HEK293T (cell line): ENCODE measurements at regions of chr2 and their contacts with region 1.

Region 1: DNA sequence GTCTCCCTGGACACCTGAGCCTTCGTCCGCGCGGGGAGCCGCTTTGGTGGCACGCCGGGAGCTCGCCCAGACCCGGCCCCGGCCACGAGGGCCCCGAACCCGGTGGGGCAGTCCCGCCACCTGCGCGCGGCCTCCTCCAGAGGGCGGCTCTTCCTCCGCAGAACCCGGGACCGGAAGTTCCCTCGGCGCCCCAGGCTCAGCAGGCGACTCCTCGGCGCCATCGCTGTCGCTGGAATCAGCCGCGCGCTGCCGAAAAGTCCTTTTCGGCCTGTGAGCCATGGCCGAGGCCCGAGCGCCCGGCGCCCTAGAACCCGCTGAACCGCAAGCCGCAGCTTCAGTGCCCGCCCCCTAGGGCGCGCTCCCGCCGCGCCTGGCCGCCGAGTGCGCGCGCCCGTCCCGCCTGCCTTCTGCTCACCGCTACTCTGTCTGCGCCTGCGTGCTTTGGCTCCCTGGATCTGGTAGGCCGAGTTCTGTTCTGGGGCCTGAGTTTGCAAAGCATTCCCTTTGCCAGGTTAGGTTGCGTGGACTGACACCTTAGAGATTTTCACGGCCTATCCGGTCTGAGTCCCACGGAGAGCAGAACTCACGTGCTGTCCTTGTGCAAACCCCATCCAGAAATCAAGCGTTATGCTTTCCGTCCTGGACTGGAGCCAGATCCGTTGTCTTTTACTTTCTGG is at the start of gene GCFC2:
- DNase-seq: peak; percentile 85

Region 2: GRCh38 chr2:75608684-75609333 is 101.9 kb before region 1 on chr2:
- CTCF ChIA-PET with region 1: no interaction called
- POLR2A ChIA-PET with region 1: no interaction called
- DNase-seq: peak; percentile 83

Region 3: DNA sequence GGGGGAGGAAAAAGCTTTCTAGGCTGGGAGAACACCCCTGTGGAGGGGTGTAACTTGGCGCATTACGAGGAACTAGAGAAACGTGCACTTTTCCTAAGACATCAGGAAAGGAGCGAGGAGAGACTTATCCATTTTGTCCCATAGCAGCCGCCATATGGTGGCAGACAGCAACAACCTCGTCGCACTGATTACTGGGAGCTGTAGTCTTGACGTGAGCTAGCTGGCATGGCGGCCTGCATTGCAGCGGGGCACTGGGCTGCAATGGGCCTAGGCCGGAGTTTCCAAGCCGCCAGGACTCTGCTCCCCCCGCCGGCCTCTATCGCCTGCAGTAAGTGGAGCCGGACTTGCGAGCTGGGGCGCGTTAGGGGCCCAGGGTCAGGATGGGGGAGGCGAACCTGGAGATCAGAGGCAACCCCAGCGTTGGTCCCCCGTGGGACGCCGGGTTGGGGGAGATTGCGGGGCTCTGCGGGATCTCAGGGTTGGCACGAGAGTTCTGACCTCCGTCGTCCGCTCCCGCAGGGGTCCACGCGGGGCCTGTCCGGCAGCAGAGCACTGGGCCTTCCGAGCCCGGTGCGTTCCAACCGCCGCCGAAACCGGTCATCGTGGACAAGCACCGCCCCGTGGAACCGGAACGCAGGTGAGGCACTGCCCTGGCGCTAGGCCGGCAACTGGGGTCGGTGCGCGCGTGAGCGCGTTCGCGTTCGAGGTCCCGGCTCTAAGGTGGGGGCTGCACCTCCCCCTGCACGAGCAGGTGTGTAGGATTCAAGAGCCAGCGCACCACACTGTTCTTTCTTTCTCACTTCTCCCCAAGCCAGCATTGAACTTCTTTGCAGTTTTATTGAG is 63.9 kb before region 1 on chr2 and contains the start of gene MRPL19:
- CTCF ChIA-PET with region 1: no interaction called
- POLR2A ChIA-PET with region 1: interaction called, 13 read pairs
- DNase-seq: peak; percentile 89

Region 4: DNA sequence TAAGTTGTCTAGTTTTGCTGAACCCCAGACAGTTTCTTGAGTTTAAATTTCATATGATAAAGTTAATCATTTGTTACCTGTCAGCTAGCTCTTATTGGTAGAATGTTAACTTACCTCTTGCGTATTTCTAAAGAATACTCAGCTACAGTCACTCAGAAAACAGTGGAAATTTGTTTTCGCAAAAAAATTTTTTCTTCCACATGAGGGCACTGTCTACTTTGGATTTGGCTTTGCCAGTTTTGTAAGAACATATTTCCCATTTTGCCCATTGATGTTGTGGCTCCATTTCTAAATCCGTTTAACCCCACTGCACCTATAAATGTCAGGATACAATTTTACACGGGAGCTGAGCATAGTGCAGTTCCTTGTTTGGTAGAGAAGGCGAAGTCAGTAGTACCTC is 19.1 kb after region 1 on chr2:
- CTCF ChIA-PET with region 1: no interaction called
- POLR2A ChIA-PET with region 1: no interaction called
- DNase-seq: no peak